ENCODE measurements at regions of chr5 and their contacts with region 1.

Region 1: GRCh38 chr5:69217548-69218526 is 16.8 kb upstream of the CDK7 start:
- DNase-seq: peak; percentile 95 to 97
- H3K4me3 ChIP-seq: peak overlapping the region; percentile 82
- H3K4me3 Mint-ChIP-seq: peak overlapping the region; percentile 97
- H3K27ac Mint-ChIP-seq: peak overlapping the region; percentile 96
- H3K4me1 ChIP-seq: peaks cover 16% of the 10 kb centered on the region
- H3K4me1 Mint-ChIP-seq: peaks cover 8% of the 10 kb centered on the region
- H3K27me3 ChIP-seq: no peaks in the 10 kb centered on the region
- H3K27me3 Mint-ChIP-seq: no peaks in the 10 kb centered on the region
- CTCF ChIP-seq: peak; percentile 24 to 41

Region 2: DNA sequence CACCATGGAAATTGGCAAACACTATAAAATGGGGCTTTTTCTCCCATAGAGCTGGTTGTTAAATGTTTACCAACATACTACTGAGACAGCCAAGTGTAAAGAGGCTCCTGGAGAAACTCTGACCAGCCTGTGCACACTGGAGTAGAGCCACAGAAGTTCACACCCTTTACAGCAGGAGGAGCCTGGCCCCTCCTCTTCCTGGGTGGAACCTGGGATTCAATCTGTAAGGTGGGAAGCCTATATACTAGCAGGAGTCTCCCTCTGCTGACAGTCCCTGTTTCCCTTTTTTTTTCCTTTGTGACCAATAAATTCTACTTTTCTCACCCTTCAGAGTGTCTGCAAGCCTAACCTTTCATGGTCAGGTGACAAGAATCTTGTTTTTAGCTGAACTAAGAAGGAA is 134.4 kb before region 1 on chr5:
- CTCF ChIA-PET with region 1: no interaction called
- POLR2A ChIA-PET with region 1: no interaction called
- intact Hi-C with region 1: no loop called
- DNase-seq: peak; percentile 74 to 76
- H3K4me3 ChIP-seq: no peak overlapping the region
- H3K4me3 Mint-ChIP-seq: no peak overlapping the region
- H3K27ac Mint-ChIP-seq: no peak overlapping the region
- H3K4me1 ChIP-seq: peaks cover 11% of the 10 kb centered on the region
- H3K4me1 Mint-ChIP-seq: peaks cover 23% of the 10 kb centered on the region
- H3K27me3 ChIP-seq: no peaks in the 10 kb centered on the region
- H3K27me3 Mint-ChIP-seq: no peaks in the 10 kb centered on the region
- CTCF ChIP-seq: peak; percentile 41 to 63

Region 3: GRCh38 chr5:69113851-69114250 is 104.0 kb before region 1 on chr5:
- CTCF ChIA-PET with region 1: no interaction called
- POLR2A ChIA-PET with region 1: no interaction called
- intact Hi-C with region 1: no loop called
- DNase-seq: no peak
- H3K4me3 ChIP-seq: no peak overlapping the region
- H3K4me3 Mint-ChIP-seq: no peak overlapping the region
- H3K27ac Mint-ChIP-seq: no peak overlapping the region
- H3K4me1 ChIP-seq: no peaks in the 10 kb centered on the region; the same call in 1 of the 2 replicates
- H3K4me1 Mint-ChIP-seq: peaks cover 14% of the 10 kb centered on the region
- H3K27me3 ChIP-seq: no peaks in the 10 kb centered on the region
- H3K27me3 Mint-ChIP-seq: no peaks in the 10 kb centered on the region
- CTCF ChIP-seq: no peak

Region 4: GRCh38 chr5:69189162-69190086 is 28.4 kb before region 1 on chr5 and contains the start of gene CENPH:
- CTCF ChIA-PET with region 1: no interaction called
- POLR2A ChIA-PET with region 1: interaction called, 3 read pairs
- intact Hi-C with region 1: loop called (anchors 1 kb)
- DNase-seq: peak; percentile 93 to 96
- H3K4me3 ChIP-seq: peak within 1 kb of the TSS; percentile 87
- H3K4me3 Mint-ChIP-seq: peak within 1 kb of the TSS; percentile 96
- H3K27ac Mint-ChIP-seq: peak within 1 kb of the TSS; percentile 100
- H3K4me1 ChIP-seq: no peaks in the 10 kb centered on the region
- H3K4me1 Mint-ChIP-seq: no peaks in the 10 kb centered on the region
- H3K27me3 ChIP-seq: no peaks in the 10 kb centered on the region
- H3K27me3 Mint-ChIP-seq: no peaks in the 10 kb centered on the region
- CTCF ChIP-seq: no peak
- total RNA-seq, gene CENPH: 30.2 and 32.4 TPM in 2 replicates

Region 5: GRCh38 chr5:69234457-69235268 is 16.8 kb after region 1 on chr5 and contains the start of gene CDK7:
- CTCF ChIA-PET with region 1: no interaction called
- POLR2A ChIA-PET with region 1: interaction called, 4 read pairs
- intact Hi-C with region 1: loop called (anchors 1 kb)
- DNase-seq: peak; percentile 92 to 94
- H3K4me3 ChIP-seq: peak within 1 kb of the TSS; percentile 93
- H3K4me3 Mint-ChIP-seq: peak within 1 kb of the TSS; percentile 83
- H3K27ac Mint-ChIP-seq: peak within 1 kb of the TSS; percentile 77
- H3K4me1 ChIP-seq: peaks cover 14% of the 10 kb centered on the region
- H3K4me1 Mint-ChIP-seq: peaks cover 18% of the 10 kb centered on the region
- H3K27me3 ChIP-seq: no peaks in the 10 kb centered on the region
- H3K27me3 Mint-ChIP-seq: no peaks in the 10 kb centered on the region
- CTCF ChIP-seq: no peak
- total RNA-seq, gene CDK7: 82.4 and 90.5 TPM in 2 replicates

Region 6: DNA sequence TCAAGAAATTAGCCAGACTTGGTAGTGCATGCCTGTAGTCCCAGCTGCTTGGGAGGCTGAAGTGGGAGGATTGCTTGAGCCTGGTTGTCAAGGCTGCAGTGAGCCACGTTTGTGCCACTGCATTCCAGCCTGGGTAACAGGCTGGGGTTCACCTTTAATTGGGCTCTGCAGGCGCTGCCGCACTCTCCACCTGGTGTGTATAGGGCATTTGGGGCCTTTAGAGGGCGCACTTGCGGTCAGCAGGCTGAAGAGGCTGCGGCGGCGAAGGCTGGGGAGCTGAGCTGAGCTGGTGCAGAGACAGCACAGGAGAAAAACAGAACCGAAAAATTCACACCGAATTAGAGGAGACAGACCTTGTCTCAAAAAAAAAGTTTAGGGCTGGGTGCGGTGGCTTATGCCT is 48.1 kb after region 1 on chr5:
- CTCF ChIA-PET with region 1: no interaction called
- POLR2A ChIA-PET with region 1: no interaction called
- intact Hi-C with region 1: no loop called
- DNase-seq: peak; percentile 52 to 59
- H3K4me3 ChIP-seq: no peak overlapping the region
- H3K4me3 Mint-ChIP-seq: no peak overlapping the region
- H3K27ac Mint-ChIP-seq: no peak overlapping the region
- H3K4me1 ChIP-seq: no peaks in the 10 kb centered on the region
- H3K4me1 Mint-ChIP-seq: peaks cover 14% of the 10 kb centered on the region
- H3K27me3 ChIP-seq: no peaks in the 10 kb centered on the region
- H3K27me3 Mint-ChIP-seq: no peaks in the 10 kb centered on the region
- CTCF ChIP-seq: peak; percentile 40 to 49

Measured in Caco-2 (cell line).